Left cardiac atrium (tissue), 4 donors: ENCODE measurements at regions of chrX and their contacts with region 1.

Region 1: GRCh38 chrX:51336584-51336983 is 4.0 kb downstream of the NUDT10 start:
- DNase-seq: no peak
- ATAC-seq: peak; percentile 45 to 60

Region 2: GRCh38 chrX:50586407-50586806 is 750.2 kb before region 1 on chrX:
- intact Hi-C with region 1: no loop called
- DNase-seq: no peak
- ATAC-seq: no peak

Region 3: GRCh38 chrX:51169410-51169809 is 167.2 kb before region 1 on chrX:
- intact Hi-C with region 1: no loop called
- DNase-seq: no peak
- ATAC-seq: no peak

Region 4: GRCh38 chrX:51298806-51299205 is 37.8 kb before region 1 on chrX:
- intact Hi-C with region 1: no loop called
- DNase-seq: no peak
- ATAC-seq: no peak

Region 5: GRCh38 chrX:51420610-51421009 is 84.0 kb after region 1 on chrX:
- intact Hi-C with region 1: loop called in 1 of 2 experiments (anchors 5 kb)
- DNase-seq: no peak
- ATAC-seq: no peak

Region 6: DNA sequence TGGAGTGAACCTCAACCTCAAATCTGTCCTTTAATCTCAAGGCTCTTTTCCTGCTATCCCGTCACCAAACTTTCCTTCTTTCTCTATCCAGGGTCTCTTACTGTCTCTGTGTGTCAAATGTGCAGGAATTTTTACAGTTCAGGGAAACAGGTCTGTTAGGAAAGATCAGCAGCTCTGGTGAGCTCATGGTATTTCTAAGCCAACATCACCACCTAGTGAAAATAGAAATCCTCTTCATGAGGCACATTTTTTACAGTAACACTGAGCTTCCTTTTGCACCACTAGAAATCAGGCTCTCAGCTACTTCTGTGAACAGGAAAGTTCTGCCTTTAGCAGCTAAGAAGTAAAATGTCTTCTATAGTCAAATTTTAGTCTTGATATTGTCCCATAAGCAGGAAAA is 120.2 kb after region 1 on chrX:
- intact Hi-C with region 1: no loop called
- DNase-seq: no peak
- ATAC-seq: no peak